Activated CD4-positive, alpha-beta T cell treated with anti-CD3 and anti-CD28 coated beads for 36 hours (primary cell): ENCODE measurements at regions of chr9 and their contacts with region 1.

Region 1: DNA sequence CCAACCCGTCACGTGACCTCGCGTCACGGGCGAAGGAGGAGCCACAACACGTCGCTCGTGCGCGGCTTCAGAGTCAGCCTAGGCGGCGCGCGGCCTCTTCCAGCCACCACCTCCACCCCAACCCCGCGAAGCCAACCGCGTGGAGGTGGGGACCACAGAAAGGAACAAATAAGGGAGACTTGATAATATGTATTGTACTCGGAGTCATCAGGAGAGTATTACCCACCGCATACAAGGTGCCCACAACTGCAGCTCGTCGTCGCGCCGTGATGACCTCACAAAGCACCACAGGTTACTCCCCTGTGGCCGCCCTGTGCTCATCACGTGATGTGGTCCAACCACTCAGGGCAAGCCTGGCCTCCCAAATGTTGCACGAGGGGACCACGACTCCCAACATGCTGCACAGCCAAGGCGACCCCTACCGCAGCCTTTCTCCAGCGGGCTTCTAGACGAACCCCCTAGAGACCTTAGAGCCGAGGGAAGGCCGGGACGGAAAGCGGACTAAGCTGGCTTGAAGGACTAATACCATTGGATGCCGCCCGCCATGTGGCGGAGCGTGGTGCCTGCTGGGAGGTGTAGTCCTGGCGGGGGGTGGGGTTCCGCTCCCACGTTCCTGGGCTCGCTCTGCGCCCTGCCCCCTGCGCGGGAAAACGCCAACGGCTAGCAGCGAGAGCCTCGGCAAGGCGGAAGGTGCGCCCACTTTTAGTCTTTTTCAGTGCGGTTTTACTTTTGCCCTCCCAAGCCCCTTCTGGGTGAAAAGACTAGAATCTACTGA is 423 bp upstream of the UBAP2 start:
- DNase-seq: peak; percentile 98
- ATAC-seq: peak; percentile 84
- H3K4me3 Mint-ChIP-seq: peak overlapping the region; percentile 90
- H3K27ac Mint-ChIP-seq: peak overlapping the region; percentile 99
- H3K4me1 Mint-ChIP-seq: peaks cover 38% of the 10 kb centered on the region
- H3K27me3 Mint-ChIP-seq: no peaks in the 10 kb centered on the region

Region 2: DNA sequence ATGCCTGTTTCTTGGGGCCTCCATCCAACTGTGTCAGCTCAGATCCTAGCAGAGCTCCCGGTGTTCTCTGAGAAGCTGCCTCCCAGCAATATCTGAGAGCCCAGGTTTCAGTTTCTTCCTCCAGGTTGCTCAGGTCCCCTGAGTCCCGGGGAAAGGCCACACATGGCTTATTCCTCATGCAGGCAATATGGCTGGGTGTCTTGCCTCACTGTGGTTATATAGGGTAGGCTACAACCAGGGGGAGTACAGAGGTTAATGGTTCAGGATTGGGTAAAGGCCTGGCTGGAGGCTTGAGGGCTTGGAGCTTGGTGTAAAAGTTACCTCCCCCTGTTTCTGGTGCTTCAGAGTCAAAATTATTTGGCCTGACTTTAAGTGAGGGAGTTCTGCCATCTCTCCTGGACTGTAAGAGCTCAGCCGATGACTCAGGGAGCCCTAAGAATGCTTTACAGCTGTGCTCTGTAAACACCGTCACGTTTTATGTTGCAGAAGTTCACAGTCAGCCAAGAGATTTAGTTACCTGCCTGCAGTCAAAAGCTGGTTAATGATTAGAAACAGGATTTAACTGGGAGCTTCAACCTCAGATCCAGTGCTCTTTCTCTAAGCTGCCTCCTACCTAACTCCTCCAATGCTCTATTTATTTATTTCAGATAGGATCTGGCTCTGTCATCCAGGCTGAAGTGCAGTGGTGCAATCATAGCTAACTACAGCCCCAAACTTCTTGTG is 23.9 kb after region 1 on chr9:
- CTCF ChIA-PET with region 1: interaction called, 7 read pairs
- POLR2A ChIA-PET with region 1: interaction called, 5 read pairs
- intact Hi-C with region 1: loop called in 1 of 2 experiments (anchors 1 kb)
- DNase-seq: no peak
- ATAC-seq: no peak
- H3K4me3 Mint-ChIP-seq: no peak overlapping the region
- H3K27ac Mint-ChIP-seq: no peak overlapping the region
- H3K4me1 Mint-ChIP-seq: no peaks in the 10 kb centered on the region
- H3K27me3 Mint-ChIP-seq: no peaks in the 10 kb centered on the region

Region 3: DNA sequence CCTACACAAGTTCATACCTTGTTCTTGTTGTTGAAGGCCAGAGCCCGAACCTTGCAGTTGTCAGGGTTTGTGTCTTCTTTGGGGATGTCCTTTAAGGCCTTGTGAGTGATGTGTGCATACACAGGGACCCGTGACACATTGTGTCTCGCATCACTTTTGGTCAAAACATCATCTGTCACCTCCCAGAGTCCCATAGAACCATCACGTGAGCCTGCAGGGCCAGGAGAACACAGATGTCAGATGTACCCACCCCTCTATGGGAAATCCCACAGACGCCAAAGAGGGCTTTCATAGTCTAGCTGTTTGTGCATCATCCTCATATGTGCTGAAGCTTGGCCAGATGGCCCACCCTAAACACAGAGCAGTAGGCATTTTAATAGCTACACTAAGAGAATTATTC is 49.2 kb after region 1 on chr9:
- CTCF ChIA-PET with region 1: no interaction called
- POLR2A ChIA-PET with region 1: no interaction called
- intact Hi-C with region 1: no loop called
- DNase-seq: no peak
- ATAC-seq: no peak
- H3K4me3 Mint-ChIP-seq: no peak overlapping the region
- H3K27ac Mint-ChIP-seq: no peak overlapping the region
- H3K4me1 Mint-ChIP-seq: no peaks in the 10 kb centered on the region
- H3K27me3 Mint-ChIP-seq: no peaks in the 10 kb centered on the region

Region 4: DNA sequence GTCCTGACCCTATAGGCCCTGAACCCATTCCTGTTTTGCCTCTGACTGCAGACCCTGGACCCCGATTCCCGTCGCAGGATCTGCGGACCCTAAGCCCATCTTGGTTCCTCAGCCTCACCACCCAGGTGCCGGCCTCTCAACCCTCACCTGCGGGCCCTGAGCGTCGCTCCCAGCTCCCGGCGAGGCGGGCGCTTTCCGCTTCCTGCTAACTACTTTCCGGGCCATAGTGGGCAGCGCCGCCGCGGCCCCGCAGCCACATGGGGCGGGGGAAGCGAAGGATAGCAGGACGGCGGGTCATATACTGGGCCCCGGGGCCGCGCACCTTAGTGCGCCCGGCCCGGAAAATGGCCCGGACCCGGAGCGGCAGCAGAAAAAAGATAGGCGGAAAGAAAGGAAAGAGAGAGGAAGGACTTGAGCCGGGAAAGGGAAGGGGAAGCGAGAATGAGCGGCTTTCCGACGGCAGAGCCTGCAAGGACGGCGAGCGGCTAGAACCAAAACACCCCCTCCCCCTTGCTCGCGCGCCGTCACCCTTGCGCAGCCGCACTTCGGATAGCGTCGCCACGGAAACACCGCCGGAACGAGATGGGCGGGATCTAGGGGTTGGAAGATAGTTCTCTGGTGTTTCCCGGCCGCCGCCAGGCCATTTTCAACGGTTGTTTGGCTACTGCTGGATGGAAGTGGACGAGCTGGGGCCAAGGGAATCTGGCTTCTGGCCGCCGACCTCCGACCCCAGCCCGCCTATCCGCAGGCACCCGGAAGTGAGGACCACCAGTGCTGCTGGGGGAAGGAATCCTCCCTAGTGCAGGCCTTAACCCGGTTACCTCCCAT is 77.3 kb after region 1 on chr9 and contains the start of gene DCAF12:
- CTCF ChIA-PET with region 1: no interaction called
- POLR2A ChIA-PET with region 1: no interaction called
- intact Hi-C with region 1: loop called (anchors 1 kb)
- DNase-seq: peak; percentile 95
- ATAC-seq: peak; percentile 97
- H3K4me3 Mint-ChIP-seq: peak within 1 kb of the TSS; percentile 95
- H3K27ac Mint-ChIP-seq: peak within 1 kb of the TSS; percentile 98
- H3K4me1 Mint-ChIP-seq: peaks cover 40% of the 10 kb centered on the region
- H3K27me3 Mint-ChIP-seq: no peaks in the 10 kb centered on the region
- total RNA-seq, gene DCAF12: 34.6 to 35.0 TPM

Region 5: DNA sequence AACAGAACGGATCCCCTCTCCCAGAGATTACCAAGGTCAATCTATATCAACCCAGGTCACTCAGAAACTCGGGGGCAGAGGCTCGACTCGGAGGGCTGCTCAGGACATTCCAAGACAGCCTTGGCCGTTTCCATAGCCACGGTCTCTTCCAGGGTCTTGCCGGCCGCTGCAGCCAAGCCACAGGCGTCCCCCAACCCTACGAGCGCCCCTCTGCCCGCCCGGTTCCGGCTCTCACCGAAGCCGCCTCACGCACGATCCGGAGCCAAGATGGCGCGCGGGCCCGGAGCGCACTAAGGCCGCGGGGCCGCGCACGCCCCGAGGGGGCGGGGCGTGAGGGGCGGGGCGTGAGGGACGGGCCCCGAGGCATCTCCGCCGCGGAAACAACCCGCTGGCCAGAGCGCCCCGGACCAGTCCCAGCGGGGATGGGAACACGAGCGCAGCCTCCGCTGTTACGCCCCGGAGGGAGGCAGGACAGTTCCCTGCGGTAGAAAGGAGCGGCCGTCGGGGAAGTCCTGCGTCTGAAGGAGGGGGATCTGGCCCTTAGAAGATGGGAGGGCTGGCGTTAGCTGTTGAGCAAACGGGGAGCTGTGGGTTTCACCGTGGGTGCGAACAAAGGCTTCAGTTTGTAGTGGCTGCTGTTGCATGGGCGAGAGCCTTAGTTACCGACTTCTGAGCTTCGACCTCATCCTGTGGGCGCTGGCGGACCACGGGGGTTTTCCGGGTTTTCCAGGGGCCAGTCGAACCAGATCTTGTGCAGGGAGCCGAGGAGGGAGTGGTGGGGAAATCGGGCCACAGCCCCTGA is 562.9 kb after region 1 on chr9 and contains the start of gene RPP25L:
- CTCF ChIA-PET with region 1: no interaction called
- POLR2A ChIA-PET with region 1: no interaction called
- intact Hi-C with region 1: loop called in 1 of 2 experiments (anchors 2 kb)
- DNase-seq: peak; percentile 91
- ATAC-seq: peak; percentile 97
- H3K4me3 Mint-ChIP-seq: peak within 1 kb of the TSS; percentile 86
- H3K27ac Mint-ChIP-seq: peak within 1 kb of the TSS; percentile 93
- H3K4me1 Mint-ChIP-seq: peaks cover 16% of the 10 kb centered on the region
- H3K27me3 Mint-ChIP-seq: no peaks in the 10 kb centered on the region
- total RNA-seq, gene RPP25L: 29.3 to 35.2 TPM

Region 6: DNA sequence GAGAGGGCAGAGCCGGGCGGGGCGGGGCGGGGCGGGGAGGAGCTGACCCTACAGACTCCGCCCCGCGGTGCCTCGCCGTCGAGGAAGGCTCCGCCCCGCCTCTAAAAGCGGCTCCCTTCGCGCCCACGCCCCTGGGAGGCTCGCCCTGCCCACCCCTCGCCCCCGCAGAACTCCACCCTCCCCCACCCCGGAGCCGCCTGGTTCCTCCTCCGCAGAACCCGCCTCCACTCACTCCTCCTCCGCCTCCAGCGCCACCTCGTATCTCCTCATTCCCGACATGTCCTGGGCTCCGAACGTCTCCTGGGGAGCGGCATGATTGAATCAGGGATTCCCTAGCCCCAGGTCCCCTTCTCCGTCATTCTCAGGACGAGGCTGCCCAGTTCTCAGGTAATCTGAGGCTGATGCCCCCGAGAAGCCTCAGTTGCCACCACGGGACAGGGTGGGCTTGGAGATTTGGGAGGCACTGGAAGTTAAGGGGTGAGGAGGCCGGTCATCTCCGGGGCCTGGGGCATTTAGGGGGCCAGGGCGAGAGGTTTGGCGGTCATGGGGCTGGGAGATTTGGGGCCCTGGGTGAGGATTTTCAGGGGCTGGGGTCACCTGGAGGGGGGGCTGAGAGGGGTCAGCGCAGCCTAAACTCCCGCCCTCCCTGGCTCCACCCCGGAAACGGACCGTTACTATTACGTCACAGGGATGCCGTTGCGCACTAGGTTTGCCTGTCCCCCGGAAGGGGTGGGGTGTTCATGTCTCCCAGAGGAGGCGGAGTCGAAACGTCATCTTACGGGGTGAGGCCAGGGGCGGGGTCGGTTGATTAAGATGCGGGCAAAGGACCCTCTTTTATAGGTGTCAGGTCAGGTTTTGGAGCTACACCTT is 616.5 kb after region 1 on chr9:
- CTCF ChIA-PET with region 1: no interaction called
- POLR2A ChIA-PET with region 1: no interaction called
- intact Hi-C with region 1: loop called in 1 of 2 experiments (anchors 10 kb)
- DNase-seq: peak; percentile 93
- ATAC-seq: peak; percentile 75
- H3K4me3 Mint-ChIP-seq: peak overlapping the region; percentile 77
- H3K27ac Mint-ChIP-seq: peak overlapping the region; percentile 87
- H3K4me1 Mint-ChIP-seq: peaks cover 33% of the 10 kb centered on the region
- H3K27me3 Mint-ChIP-seq: no peaks in the 10 kb centered on the region